CD8-positive, alpha-beta T cell (primary cell): ENCODE measurements at regions of chr3 and their contacts with region 1.

Region 1: GRCh38 chr3:16828815-16829214 is 55.9 kb upstream of the PLCL2 start:
- DNase-seq: peak in 8 of 9 experiments; percentile 34 to 80 (median 60)
- ATAC-seq: peak; percentile 73
- H3K4me3 ChIP-seq: no peak overlapping the region
- H3K4me3 Mint-ChIP-seq: no peak overlapping the region
- H3K27ac ChIP-seq: no peak overlapping the region
- H3K27ac Mint-ChIP-seq: peak overlapping the region; percentile 60
- H3K4me1 ChIP-seq: peaks cover 15% of the 10 kb centered on the region
- H3K4me1 Mint-ChIP-seq: peaks cover 26% of the 10 kb centered on the region
- H3K27me3 ChIP-seq: no peaks in the 10 kb centered on the region
- H3K27me3 Mint-ChIP-seq: no peaks in the 10 kb centered on the region
- CTCF ChIP-seq: peak; percentile 37

Region 2: DNA sequence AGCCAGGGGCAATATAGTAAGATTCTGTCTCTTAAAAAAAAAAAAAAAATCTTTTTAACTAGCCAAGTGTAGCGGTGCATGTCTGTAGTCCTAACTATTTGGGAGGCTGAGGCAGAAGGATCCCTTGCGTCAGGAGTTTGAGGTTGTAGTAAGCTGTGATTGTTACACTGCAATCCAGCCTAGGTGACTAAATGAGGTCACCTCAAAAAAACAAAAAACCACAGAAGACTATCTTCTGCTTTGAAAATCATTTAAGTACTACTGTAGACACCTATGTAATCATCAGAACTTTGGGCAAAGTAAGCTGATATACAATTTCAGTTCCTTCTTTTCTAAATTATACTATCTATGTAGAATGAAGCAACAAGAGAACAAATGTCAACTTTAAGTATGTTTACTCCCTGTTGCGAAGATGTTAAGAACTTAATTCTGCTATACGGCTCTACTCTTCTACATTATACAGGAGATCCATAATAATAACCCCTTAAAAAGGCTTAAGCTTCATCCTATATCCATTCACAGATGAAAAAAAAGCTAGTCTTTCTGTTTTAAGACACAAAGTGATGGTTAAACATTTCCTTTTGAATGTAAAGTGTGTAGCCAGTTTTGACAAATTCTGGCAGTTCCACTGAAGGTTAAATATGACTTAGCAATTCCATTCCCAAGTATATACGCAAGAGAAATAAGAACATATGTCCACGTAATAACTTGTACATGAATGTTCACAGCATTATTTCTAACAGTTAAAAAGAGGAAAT is 238.8 kb before region 1 on chr3:
- CTCF ChIA-PET with region 1: no interaction called
- POLR2A ChIA-PET with region 1: no interaction called
- intact Hi-C with region 1: no loop called
- DNase-seq: no peak
- ATAC-seq: no peak
- H3K4me3 ChIP-seq: no peak overlapping the region
- H3K4me3 Mint-ChIP-seq: no peak overlapping the region
- H3K27ac ChIP-seq: no peak overlapping the region
- H3K27ac Mint-ChIP-seq: no peak overlapping the region
- H3K4me1 ChIP-seq: no peaks in the 10 kb centered on the region
- H3K4me1 Mint-ChIP-seq: no peaks in the 10 kb centered on the region
- H3K27me3 ChIP-seq: no peaks in the 10 kb centered on the region
- H3K27me3 Mint-ChIP-seq: no peaks in the 10 kb centered on the region
- CTCF ChIP-seq: no peak

Region 3: GRCh38 chr3:16801698-16802097 is 27.1 kb before region 1 on chr3:
- CTCF ChIA-PET with region 1: no interaction called
- POLR2A ChIA-PET with region 1: no interaction called
- intact Hi-C with region 1: no loop called
- DNase-seq: peak in 2 of 9 experiments; percentile 10 to 37
- ATAC-seq: peak; percentile 31
- H3K4me3 ChIP-seq: no peak overlapping the region
- H3K4me3 Mint-ChIP-seq: no peak overlapping the region
- H3K27ac ChIP-seq: no peak overlapping the region
- H3K27ac Mint-ChIP-seq: peak overlapping the region; percentile 42
- H3K4me1 ChIP-seq: peaks cover 17% of the 10 kb centered on the region
- H3K4me1 Mint-ChIP-seq: peaks cover 34% of the 10 kb centered on the region
- H3K27me3 ChIP-seq: no peaks in the 10 kb centered on the region
- H3K27me3 Mint-ChIP-seq: no peaks in the 10 kb centered on the region
- CTCF ChIP-seq: no peak

Region 4: GRCh38 chr3:16842272-16843270 is 13.8 kb after region 1 on chr3:
- CTCF ChIA-PET with region 1: interaction called, 8 read pairs
- POLR2A ChIA-PET with region 1: interaction called, 5 read pairs
- intact Hi-C with region 1: loop called in 1 of 2 experiments (anchors 1 kb)
- DNase-seq: peak; percentile 48 to 91 (median 77)
- ATAC-seq: peak; percentile 90
- H3K4me3 ChIP-seq: peak overlapping the region; percentile 35 to 42
- H3K4me3 Mint-ChIP-seq: peak overlapping the region; percentile 80
- H3K27ac ChIP-seq: peak overlapping the region; percentile 63 to 89
- H3K27ac Mint-ChIP-seq: peak overlapping the region; percentile 98
- H3K4me1 ChIP-seq: peaks cover 60% of the 10 kb centered on the region
- H3K4me1 Mint-ChIP-seq: peaks cover 81% of the 10 kb centered on the region
- H3K27me3 ChIP-seq: no peaks in the 10 kb centered on the region
- H3K27me3 Mint-ChIP-seq: no peaks in the 10 kb centered on the region
- CTCF ChIP-seq: no peak

Region 5: GRCh38 chr3:16866571-16866970 is 37.8 kb after region 1 on chr3:
- CTCF ChIA-PET with region 1: no interaction called
- POLR2A ChIA-PET with region 1: no interaction called
- intact Hi-C with region 1: no loop called
- DNase-seq: peak in 2 of 9 experiments; percentile 50 to 56
- ATAC-seq: peak; percentile 17
- H3K4me3 ChIP-seq: no peak overlapping the region
- H3K4me3 Mint-ChIP-seq: no peak overlapping the region
- H3K27ac ChIP-seq: no peak overlapping the region
- H3K27ac Mint-ChIP-seq: no peak overlapping the region
- H3K4me1 ChIP-seq: peaks cover 10% of the 10 kb centered on the region
- H3K4me1 Mint-ChIP-seq: peaks cover 13% of the 10 kb centered on the region
- H3K27me3 ChIP-seq: no peaks in the 10 kb centered on the region
- H3K27me3 Mint-ChIP-seq: no peaks in the 10 kb centered on the region
- CTCF ChIP-seq: no peak

Region 6: DNA sequence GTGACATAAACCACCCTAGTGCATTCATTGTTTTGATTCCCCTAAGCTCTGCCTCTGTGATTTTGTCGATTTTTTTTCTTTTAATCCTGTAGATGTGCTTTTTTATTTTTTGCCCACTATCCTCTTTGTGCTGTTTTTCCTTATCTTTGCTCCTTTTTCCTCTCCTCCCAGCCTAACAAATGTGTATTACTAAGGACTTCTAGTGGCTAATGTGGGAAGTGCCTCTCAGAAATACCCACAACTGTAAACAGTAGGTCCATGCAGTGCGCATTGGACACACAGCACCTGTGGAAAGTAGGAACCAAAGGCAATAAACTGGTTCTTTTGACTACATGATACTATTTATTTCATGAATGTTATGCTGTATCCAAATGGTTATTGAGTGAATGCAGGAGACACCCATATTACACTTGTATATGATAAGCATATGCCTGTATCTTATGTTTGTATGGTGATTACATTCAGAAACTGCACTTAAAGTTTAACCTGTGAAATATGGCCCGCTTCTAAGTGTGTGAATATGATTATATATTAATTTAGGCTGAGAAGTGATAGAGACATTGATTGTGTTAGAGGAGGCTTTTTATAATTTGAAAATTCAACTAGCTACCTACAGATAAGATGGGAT is 203.7 kb after region 1 on chr3:
- CTCF ChIA-PET with region 1: no interaction called
- POLR2A ChIA-PET with region 1: no interaction called
- intact Hi-C with region 1: loop called in 1 of 2 experiments (anchors 5 kb)
- DNase-seq: peak in 2 of 9 experiments; percentile 13 to 24
- ATAC-seq: peak; percentile 31
- H3K4me3 ChIP-seq: no peak overlapping the region
- H3K4me3 Mint-ChIP-seq: no peak overlapping the region
- H3K27ac ChIP-seq: no peak overlapping the region
- H3K27ac Mint-ChIP-seq: no peak overlapping the region
- H3K4me1 ChIP-seq: peaks cover 22% of the 10 kb centered on the region
- H3K4me1 Mint-ChIP-seq: peaks cover 81% of the 10 kb centered on the region
- H3K27me3 ChIP-seq: no peaks in the 10 kb centered on the region
- H3K27me3 Mint-ChIP-seq: no peaks in the 10 kb centered on the region
- CTCF ChIP-seq: peak; percentile 36

Region 7: GRCh38 chr3:17151598-17152373 is 323.0 kb after region 1 on chr3:
- CTCF ChIA-PET with region 1: no interaction called
- POLR2A ChIA-PET with region 1: no interaction called
- intact Hi-C with region 1: loop called in 1 of 2 experiments (anchors 10 kb)
- DNase-seq: peak; percentile 54 to 92 (median 76)
- ATAC-seq: peak; percentile 92
- H3K4me3 ChIP-seq: peak overlapping the region; percentile 9 to 12
- H3K4me3 Mint-ChIP-seq: peak overlapping the region; percentile 67
- H3K27ac ChIP-seq: peak overlapping the region; percentile 13 to 60
- H3K27ac Mint-ChIP-seq: peak overlapping the region; percentile 88
- H3K4me1 ChIP-seq: peaks cover 27% of the 10 kb centered on the region
- H3K4me1 Mint-ChIP-seq: peaks cover 45% of the 10 kb centered on the region
- H3K27me3 ChIP-seq: no peaks in the 10 kb centered on the region
- H3K27me3 Mint-ChIP-seq: no peaks in the 10 kb centered on the region
- CTCF ChIP-seq: no peak